Gastrocnemius medialis (tissue), 4 donors: ENCODE measurements at regions of chr2 and their contacts with region 1.

Region 1: GRCh38 chr2:38377050-38377828 is at the start of gene ATL2:
- DNase-seq: peak; percentile 96
- ATAC-seq: peak; percentile 88 to 90
- H3K4me3 ChIP-seq: peak within 1 kb of the TSS; percentile 79 to 96 (median 90)
- H3K27ac ChIP-seq: peak within 1 kb of the TSS; percentile 93 to 99 (median 97)
- H3K4me1 ChIP-seq: peaks cover 38 to 42% of the 10 kb centered on the region in 2 donors
- H3K27me3 ChIP-seq: no peaks in the 10 kb centered on the region
- CTCF ChIP-seq: no peak
- POLR2A ChIP-seq: peak; percentile 96 to 97
- total RNA-seq, gene ATL2: 60.1 to 130 (median 108) TPM

Region 2: GRCh38 chr2:38498045-38498481 is 120.8 kb after region 1 on chr2:
- in situ Hi-C with region 1: no loop called
- intact Hi-C with region 1: loop called (anchors 5 kb)
- DNase-seq: no peak
- ATAC-seq: no peak
- H3K4me3 ChIP-seq: no peak overlapping the region
- H3K27ac ChIP-seq: peak overlapping the region; percentile 78 to 93 (median 86)
- H3K4me1 ChIP-seq: peaks cover 54 to 66% of the 10 kb centered on the region in 2 donors
- H3K27me3 ChIP-seq: no peaks in the 10 kb centered on the region
- CTCF ChIP-seq: no peak
- POLR2A ChIP-seq: no peak

Region 3: GRCh38 chr2:38528008-38528442 is 150.8 kb after region 1 on chr2:
- in situ Hi-C with region 1: no loop called
- intact Hi-C with region 1: loop called (anchors 5 kb)
- DNase-seq: no peak
- ATAC-seq: peak; percentile 12 to 56
- H3K4me3 ChIP-seq: peak overlapping the region; percentile 49 to 60 (median 56)
- H3K27ac ChIP-seq: peak overlapping the region; percentile 72 to 91 (median 80)
- H3K4me1 ChIP-seq: peaks cover 31 to 37% of the 10 kb centered on the region in 2 donors
- H3K27me3 ChIP-seq: no peaks in the 10 kb centered on the region
- CTCF ChIP-seq: no peak
- POLR2A ChIP-seq: no peak

Region 4: DNA sequence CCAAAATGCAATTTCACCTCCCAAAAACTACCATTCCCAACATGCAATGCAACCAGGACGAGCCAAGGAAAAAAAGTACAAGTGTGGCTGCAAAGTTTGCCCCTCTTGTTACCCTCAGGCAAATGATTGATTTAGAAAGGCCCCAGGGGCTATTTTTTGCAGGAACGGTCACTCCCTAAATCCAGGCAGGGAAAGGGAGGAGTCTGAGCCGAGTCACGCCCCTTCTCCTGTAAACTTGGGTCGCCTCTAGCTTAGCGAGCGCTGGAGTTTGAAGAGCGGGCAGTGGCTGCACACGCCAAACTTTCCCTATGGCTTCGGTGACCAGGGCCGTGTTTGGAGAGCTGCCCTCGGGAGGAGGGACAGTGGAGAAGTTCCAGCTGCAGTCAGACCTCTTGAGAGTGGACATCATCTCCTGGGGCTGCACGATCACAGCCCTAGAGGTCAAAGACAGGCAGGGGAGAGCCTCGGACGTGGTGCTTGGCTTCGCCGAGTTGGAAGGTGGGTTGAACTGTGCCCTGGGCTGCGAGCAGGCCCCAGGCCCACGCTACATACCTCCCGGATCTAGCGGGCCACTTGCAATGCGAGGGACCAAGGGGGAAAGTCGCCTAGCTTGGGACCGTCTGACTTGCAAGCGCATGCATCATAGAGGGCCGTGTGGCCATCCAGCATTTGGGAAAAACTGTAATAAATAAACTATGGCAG is 288.8 kb after region 1 on chr2 and contains the start of gene GALM:
- in situ Hi-C with region 1: no loop called
- intact Hi-C with region 1: loop called (anchors 5 kb)
- DNase-seq: peak; percentile 79 to 89
- ATAC-seq: peak; percentile 81 to 96
- H3K4me3 ChIP-seq: peak within 1 kb of the TSS; percentile 63 to 76 (median 75)
- H3K27ac ChIP-seq: peak within 1 kb of the TSS; percentile 73 to 81 (median 78)
- H3K4me1 ChIP-seq: peaks cover 13 to 23% of the 10 kb centered on the region in 2 donors
- H3K27me3 ChIP-seq: no peaks in the 10 kb centered on the region
- CTCF ChIP-seq: no peak
- POLR2A ChIP-seq: peak; percentile 38 to 70
- total RNA-seq, gene GALM: 5.3 to 16.9 (median 14.9) TPM

Region 5: GRCh38 chr2:38682008-38682575 is 304.9 kb after region 1 on chr2:
- in situ Hi-C with region 1: no loop called
- intact Hi-C with region 1: no loop called
- DNase-seq: no peak
- ATAC-seq: no peak
- H3K4me3 ChIP-seq: no peak overlapping the region
- H3K27ac ChIP-seq: no peak overlapping the region
- H3K4me1 ChIP-seq: no peaks in the 10 kb centered on the region
- H3K27me3 ChIP-seq: no peaks in the 10 kb centered on the region
- CTCF ChIP-seq: no peak
- POLR2A ChIP-seq: no peak

Region 6: GRCh38 chr2:38740851-38741731 is 363.9 kb after region 1 on chr2:
- in situ Hi-C with region 1: loop called in 1 of 4 experiments (anchors 25 kb)
- intact Hi-C with region 1: no loop called
- DNase-seq: no peak
- ATAC-seq: peak in 1 of 2 donors; percentile 39
- H3K4me3 ChIP-seq: no peak overlapping the region
- H3K27ac ChIP-seq: peak overlapping the region; percentile 25 to 77 (median 52)
- H3K4me1 ChIP-seq: peaks cover 8 to 28% of the 10 kb centered on the region in 2 donors
- H3K27me3 ChIP-seq: no peaks in the 10 kb centered on the region
- CTCF ChIP-seq: peak; percentile 55 to 78 (median 67)
- POLR2A ChIP-seq: no peak

Region 7: DNA sequence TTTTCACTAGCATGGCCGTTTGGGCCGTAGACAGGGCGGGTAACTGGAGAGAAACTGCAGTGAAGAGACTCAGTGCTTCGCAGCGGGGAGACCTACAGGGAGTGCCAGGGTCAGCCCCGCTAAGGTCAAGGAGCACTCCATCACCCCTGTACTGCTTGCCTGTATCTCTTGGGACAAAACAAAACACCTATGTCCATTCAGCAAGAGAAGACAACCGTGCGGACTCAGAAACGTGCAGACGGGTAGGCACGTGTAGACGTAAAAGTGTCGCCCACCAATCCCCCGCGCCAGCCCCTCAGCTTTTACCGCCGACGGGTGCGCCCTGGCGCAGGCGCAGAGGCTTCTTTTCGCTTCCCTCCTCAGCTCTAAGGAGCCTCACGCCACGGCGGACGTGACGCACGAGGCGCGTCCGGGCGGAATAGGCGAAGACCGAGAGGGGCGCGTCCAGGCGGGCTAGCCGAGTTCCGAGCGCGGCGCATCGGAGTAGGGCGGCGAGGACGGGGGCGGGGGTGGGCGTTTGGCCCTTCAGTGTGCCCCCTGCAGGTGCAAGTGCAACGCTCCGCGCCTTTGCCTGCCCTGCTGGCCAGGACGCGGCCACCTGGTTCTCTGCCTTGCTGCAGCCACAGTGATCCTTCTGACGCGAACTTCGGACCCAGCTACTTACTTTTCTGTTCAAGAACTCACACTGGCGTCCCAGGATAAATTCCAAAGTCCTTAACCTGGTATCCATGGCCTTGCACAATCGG is 746.9 kb after region 1 on chr2:
- in situ Hi-C with region 1: no loop called
- intact Hi-C with region 1: loop called (anchors 5 kb)
- DNase-seq: peak; percentile 91 to 93
- ATAC-seq: peak; percentile 53 to 63
- H3K4me3 ChIP-seq: peak overlapping the region; percentile 79 to 87 (median 84)
- H3K27ac ChIP-seq: peak overlapping the region; percentile 90 to 96 (median 95)
- H3K4me1 ChIP-seq: peaks cover 31 to 38% of the 10 kb centered on the region in 2 donors
- H3K27me3 ChIP-seq: no peaks in the 10 kb centered on the region
- CTCF ChIP-seq: peak in 3 of 5 experiments; percentile 47 to 68 (median 61)
- POLR2A ChIP-seq: peak; percentile 68 to 82